ENCODE measurements at regions of chr3 and their contacts with region 1.

Region 1: GRCh38 chr3:8987645-8988383 is 24.5 kb upstream of the RAD18 start:
- DNase-seq: peak in 13 of 14 experiments; percentile 10 to 78 (median 47)
- ATAC-seq: peak; percentile 96
- H3K4me3 ChIP-seq: no peak overlapping the region
- H3K4me3 Mint-ChIP-seq: no peak overlapping the region
- H3K27ac ChIP-seq: no peak overlapping the region
- H3K27ac Mint-ChIP-seq: no peak overlapping the region
- H3K4me1 ChIP-seq: peaks cover 4% of the 10 kb centered on the region
- H3K4me1 Mint-ChIP-seq: peaks cover 5% of the 10 kb centered on the region
- H3K27me3 ChIP-seq: no peaks in the 10 kb centered on the region
- H3K27me3 Mint-ChIP-seq: no peaks in the 10 kb centered on the region
- CTCF ChIP-seq: peak; percentile 58

Region 2: GRCh38 chr3:8301728-8302462 is 685.9 kb before region 1 on chr3:
- CTCF ChIA-PET with region 1: no interaction called
- POLR2A ChIA-PET with region 1: no interaction called
- intact Hi-C with region 1: no loop called
- DNase-seq: peak in 4 of 14 experiments; percentile 4 to 66 (median 52)
- ATAC-seq: peak; percentile 67
- H3K4me3 ChIP-seq: no peak overlapping the region
- H3K4me3 Mint-ChIP-seq: no peak overlapping the region
- H3K27ac ChIP-seq: no peak overlapping the region
- H3K27ac Mint-ChIP-seq: no peak overlapping the region
- H3K4me1 ChIP-seq: no peaks in the 10 kb centered on the region
- H3K4me1 Mint-ChIP-seq: peaks cover 7% of the 10 kb centered on the region
- H3K27me3 ChIP-seq: no peaks in the 10 kb centered on the region
- H3K27me3 Mint-ChIP-seq: no peaks in the 10 kb centered on the region
- CTCF ChIP-seq: peak; percentile 58

Region 3: DNA sequence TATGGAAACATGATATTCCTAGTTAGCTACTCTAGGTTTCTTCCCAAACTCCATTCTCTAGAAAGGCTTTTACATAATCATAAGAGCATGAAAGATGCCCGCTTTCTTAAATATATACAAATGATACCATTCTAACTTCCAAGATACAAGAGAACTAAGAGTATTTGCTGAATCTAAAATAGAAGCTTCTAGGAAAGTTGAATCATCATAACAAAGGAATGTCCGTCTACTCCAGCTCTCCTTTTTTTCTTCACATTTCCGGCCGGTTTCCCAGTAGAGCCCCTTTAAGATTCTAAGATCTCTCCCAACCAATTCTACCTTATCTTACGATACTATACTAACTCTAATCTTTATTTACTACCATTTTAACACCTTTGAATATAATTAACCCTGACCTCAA is 84.6 kb before region 1 on chr3:
- CTCF ChIA-PET with region 1: no interaction called
- POLR2A ChIA-PET with region 1: no interaction called
- intact Hi-C with region 1: no loop called
- DNase-seq: no peak
- ATAC-seq: no peak
- H3K4me3 ChIP-seq: no peak overlapping the region
- H3K4me3 Mint-ChIP-seq: no peak overlapping the region
- H3K27ac ChIP-seq: no peak overlapping the region
- H3K27ac Mint-ChIP-seq: no peak overlapping the region
- H3K4me1 ChIP-seq: no peaks in the 10 kb centered on the region
- H3K4me1 Mint-ChIP-seq: no peaks in the 10 kb centered on the region
- H3K27me3 ChIP-seq: no peaks in the 10 kb centered on the region
- H3K27me3 Mint-ChIP-seq: no peaks in the 10 kb centered on the region
- CTCF ChIP-seq: no peak

Region 4: DNA sequence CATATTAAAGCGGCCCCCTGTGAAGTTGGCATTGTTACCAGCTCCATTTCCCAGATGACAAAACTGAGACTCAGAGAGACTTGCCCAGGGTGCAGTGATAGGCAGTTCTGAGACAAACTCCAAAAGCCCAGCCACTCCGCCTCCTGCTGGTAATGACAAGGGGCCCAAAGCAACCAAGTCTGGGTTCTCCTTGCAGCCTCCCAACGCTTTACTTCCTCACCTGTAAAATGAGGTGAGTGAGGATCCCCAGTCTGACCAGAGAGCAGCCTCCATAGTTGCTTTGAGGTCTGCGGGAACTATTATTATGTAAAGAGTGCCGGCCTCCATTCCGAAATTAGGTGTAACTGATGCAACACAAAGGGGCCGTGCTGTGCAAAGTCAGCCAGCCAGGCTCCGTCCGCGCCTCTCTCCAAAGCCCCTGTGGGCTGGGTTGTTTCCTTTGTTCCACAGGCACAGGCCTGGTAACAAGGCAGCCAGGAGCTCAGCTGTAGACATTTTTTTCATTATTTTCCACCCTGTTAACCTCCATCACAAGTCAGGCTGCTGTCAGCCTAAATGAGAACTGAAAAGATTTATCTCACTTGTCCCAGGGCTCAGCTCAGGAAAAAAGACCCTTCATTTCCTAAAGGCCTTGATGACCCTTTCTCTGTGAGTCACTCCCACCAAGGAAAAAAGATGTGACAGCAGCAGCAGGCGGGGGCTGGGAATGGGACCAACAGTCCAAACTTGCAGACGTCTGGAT is 114.6 kb after region 1 on chr3:
- CTCF ChIA-PET with region 1: no interaction called
- POLR2A ChIA-PET with region 1: no interaction called
- intact Hi-C with region 1: no loop called
- DNase-seq: no peak
- ATAC-seq: no peak
- H3K4me3 ChIP-seq: no peak overlapping the region
- H3K4me3 Mint-ChIP-seq: no peak overlapping the region
- H3K27ac ChIP-seq: no peak overlapping the region
- H3K27ac Mint-ChIP-seq: no peak overlapping the region
- H3K4me1 ChIP-seq: no peaks in the 10 kb centered on the region
- H3K4me1 Mint-ChIP-seq: no peaks in the 10 kb centered on the region
- H3K27me3 ChIP-seq: no peaks in the 10 kb centered on the region
- H3K27me3 Mint-ChIP-seq: no peaks in the 10 kb centered on the region
- CTCF ChIP-seq: no peak

Region 5: GRCh38 chr3:9302425-9303181 is 314.8 kb after region 1 on chr3:
- CTCF ChIA-PET with region 1: interaction called, 13 read pairs
- POLR2A ChIA-PET with region 1: no interaction called
- intact Hi-C with region 1: loop called in 1 of 2 experiments (anchors 1 kb)
- DNase-seq: peak; percentile 69 to 89 (median 73)
- ATAC-seq: peak; percentile 99
- H3K4me3 ChIP-seq: peak overlapping the region; percentile 9
- H3K4me3 Mint-ChIP-seq: peak overlapping the region; percentile 3
- H3K27ac ChIP-seq: no peak overlapping the region
- H3K27ac Mint-ChIP-seq: no peak overlapping the region
- H3K4me1 ChIP-seq: peaks cover 6% of the 10 kb centered on the region
- H3K4me1 Mint-ChIP-seq: no peaks in the 10 kb centered on the region
- H3K27me3 ChIP-seq: no peaks in the 10 kb centered on the region
- H3K27me3 Mint-ChIP-seq: peaks cover 29% of the 10 kb centered on the region
- CTCF ChIP-seq: peak; percentile 90